GM12878 (cell line): ENCODE measurements at regions of chr20 and their contacts with region 1.

Region 1: DNA sequence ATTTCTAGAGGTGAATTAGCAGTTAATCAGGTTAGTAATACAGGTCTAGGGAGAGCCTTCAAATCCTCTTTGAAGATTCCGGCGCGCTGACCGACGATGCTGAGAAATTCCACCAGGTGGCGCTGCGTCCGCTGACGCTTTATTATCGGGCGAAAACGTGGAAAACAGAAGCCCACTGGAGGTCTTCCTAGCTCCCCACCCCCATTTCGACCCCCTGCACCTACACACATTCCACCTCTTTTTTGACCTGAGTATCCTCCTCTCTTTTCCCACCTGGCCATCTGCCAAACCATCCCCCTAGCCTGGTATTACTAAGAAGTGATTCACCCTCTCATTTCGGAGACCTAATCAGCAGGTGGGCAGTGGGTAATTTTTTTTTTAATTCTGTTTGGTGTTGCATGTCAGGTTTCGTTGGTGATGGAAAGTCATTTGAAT is 65.4 kb upstream of the RIN2 start:
- DNase-seq: no peak
- ATAC-seq: peak; percentile 81
- H3K4me3 ChIP-seq: no peak overlapping the region
- H3K27ac ChIP-seq: no peak overlapping the region
- H3K4me1 ChIP-seq: no peaks in the 10 kb centered on the region
- H3K27me3 ChIP-seq: peaks cover 0 to 2% of the 10 kb centered on the region in 2 experiments; a peak in 2 of 4 replicates
- CTCF ChIP-seq: peak; percentile 82 to 88 (median 85)
- EP300 ChIP-seq: no peak
- POLR2A ChIP-seq: no peak
- RAD21 ChIP-seq: peak; percentile 62

Region 2: DNA sequence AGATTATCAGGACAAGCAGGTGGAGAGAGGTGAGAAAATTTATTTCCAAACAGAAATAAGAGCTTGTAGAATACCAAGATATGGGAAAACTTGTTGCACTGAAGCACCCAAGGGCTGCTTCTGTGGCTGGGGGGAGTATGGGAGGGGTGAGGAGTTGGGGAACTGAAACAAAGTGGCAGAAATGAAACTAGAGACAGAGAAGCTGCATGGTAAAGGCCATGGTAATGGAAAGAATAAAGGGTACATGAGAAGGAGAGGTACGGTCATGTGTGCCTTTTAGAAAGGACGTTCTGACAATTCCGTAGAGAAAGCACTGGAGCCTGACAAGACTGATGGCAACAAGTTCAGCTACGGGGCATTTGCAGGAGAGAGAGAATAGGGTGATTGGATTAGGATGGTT is 13.8 kb after region 1 on chr20:
- CTCF ChIA-PET with region 1: interaction called, 12 read pairs
- POLR2A ChIA-PET with region 1: interaction called, 3 read pairs
- RAD21 ChIA-PET with region 1: interaction called, 4 read pairs
- SMC1A ChIA-PET with region 1: interaction called, 25 read pairs
- in situ Hi-C with region 1: no loop called
- intact Hi-C with region 1: no loop called
- DNase-seq: peak; percentile 27
- ATAC-seq: peak; percentile 89
- H3K4me3 ChIP-seq: no peak overlapping the region
- H3K27ac ChIP-seq: no peak overlapping the region
- H3K4me1 ChIP-seq: no peaks in the 10 kb centered on the region
- H3K27me3 ChIP-seq: peaks cover 0 to 3% of the 10 kb centered on the region in 2 experiments; a peak in 2 of 4 replicates
- CTCF ChIP-seq: no peak
- EP300 ChIP-seq: no peak
- POLR2A ChIP-seq: no peak
- RAD21 ChIP-seq: no peak

Region 3: DNA sequence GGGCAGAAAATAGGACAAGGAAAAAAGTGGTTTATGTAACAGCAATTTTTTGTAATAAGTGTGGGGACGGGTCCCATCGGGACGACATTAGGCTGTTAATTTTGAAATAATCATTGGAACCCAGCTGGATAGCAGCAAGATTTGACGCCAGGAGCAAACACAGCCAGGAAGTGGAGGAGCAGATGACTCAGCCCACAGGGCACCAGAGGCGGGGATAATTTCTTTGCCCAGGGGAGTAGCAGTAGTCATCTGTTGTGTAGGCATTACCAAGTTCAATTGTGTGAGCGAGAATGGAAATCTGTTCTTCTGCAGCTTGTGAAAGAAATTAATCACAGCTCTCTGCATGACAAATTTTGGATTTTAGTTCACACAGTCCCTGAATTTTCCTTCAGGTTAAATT is 42.7 kb after region 1 on chr20:
- CTCF ChIA-PET with region 1: interaction called, 9 read pairs
- POLR2A ChIA-PET with region 1: interaction called, 4 read pairs
- RAD21 ChIA-PET with region 1: interaction called, 10 read pairs
- SMC1A ChIA-PET with region 1: interaction called, 5 read pairs
- in situ Hi-C with region 1: no loop called
- intact Hi-C with region 1: no loop called
- DNase-seq: peak; percentile 3
- ATAC-seq: peak; percentile 77
- H3K4me3 ChIP-seq: no peak overlapping the region
- H3K27ac ChIP-seq: no peak overlapping the region
- H3K4me1 ChIP-seq: no peaks in the 10 kb centered on the region
- H3K27me3 ChIP-seq: no peaks in the 10 kb centered on the region
- CTCF ChIP-seq: no peak
- EP300 ChIP-seq: no peak
- POLR2A ChIP-seq: no peak
- RAD21 ChIP-seq: no peak

Region 4: GRCh38 chr20:19775360-19776253 is 82.9 kb after region 1 on chr20:
- CTCF ChIA-PET with region 1: interaction called, 12 read pairs
- POLR2A ChIA-PET with region 1: no interaction called
- RAD21 ChIA-PET with region 1: interaction called, 20 read pairs
- SMC1A ChIA-PET with region 1: interaction called, 16 read pairs
- in situ Hi-C with region 1: no loop called
- intact Hi-C with region 1: loop called (anchors 1 kb)
- DNase-seq: no peak
- ATAC-seq: no peak
- H3K4me3 ChIP-seq: no peak overlapping the region
- H3K27ac ChIP-seq: no peak overlapping the region
- H3K4me1 ChIP-seq: peaks cover 7% of the 10 kb centered on the region; the same call in 1 of the 2 replicates
- H3K27me3 ChIP-seq: peaks cover 0 to 1% of the 10 kb centered on the region in 2 experiments; a peak in 3 of 4 replicates
- CTCF ChIP-seq: no peak
- EP300 ChIP-seq: no peak
- POLR2A ChIP-seq: no peak
- RAD21 ChIP-seq: no peak

Region 5: DNA sequence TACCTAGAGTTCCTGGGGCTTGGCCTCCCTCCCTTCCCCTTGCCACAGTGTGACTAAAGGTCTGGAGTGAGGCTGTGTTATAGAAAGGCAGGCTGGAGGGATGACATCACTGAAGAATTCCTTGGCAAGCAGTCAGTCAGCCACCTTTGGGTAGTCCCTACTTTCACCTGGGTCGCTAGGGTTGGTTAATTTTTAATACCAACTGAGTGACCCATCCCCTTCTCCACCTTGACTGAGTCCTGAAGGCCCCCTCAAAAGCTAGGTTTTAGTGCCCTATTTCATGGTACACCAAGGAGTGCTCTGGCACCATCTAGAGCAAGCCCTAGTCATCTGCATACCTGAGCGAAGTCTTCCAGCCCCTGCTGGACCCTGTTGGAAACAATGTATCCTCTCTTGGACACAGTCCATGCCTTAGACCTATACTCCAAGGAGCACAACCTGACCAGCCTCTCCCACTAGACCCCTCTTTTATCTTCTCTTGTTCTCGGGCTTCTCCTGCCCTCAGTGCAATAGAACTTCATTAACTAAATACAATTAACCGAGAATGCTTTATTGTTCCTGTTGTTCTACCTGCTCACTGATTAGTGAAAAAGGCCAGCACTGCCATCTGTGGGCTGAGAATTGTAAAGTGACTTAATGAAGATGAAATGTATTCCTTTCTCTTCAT is 109.9 kb after region 1 on chr20:
- CTCF ChIA-PET with region 1: interaction called, 16 read pairs
- POLR2A ChIA-PET with region 1: no interaction called
- RAD21 ChIA-PET with region 1: interaction called, 3 read pairs
- SMC1A ChIA-PET with region 1: interaction called, 6 read pairs
- in situ Hi-C with region 1: no loop called
- intact Hi-C with region 1: loop called (anchors 2 kb)
- DNase-seq: no peak
- ATAC-seq: peak; percentile 82
- H3K4me3 ChIP-seq: no peak overlapping the region
- H3K27ac ChIP-seq: no peak overlapping the region
- H3K4me1 ChIP-seq: no peaks in the 10 kb centered on the region
- H3K27me3 ChIP-seq: no peaks in the 10 kb centered on the region
- CTCF ChIP-seq: peak in 2 of 3 experiments; percentile 12 to 29; a peak in 3 of 6 replicates
- EP300 ChIP-seq: no peak
- POLR2A ChIP-seq: no peak
- RAD21 ChIP-seq: 0 out of 2 replicates have a peak, but pooled peaks have one; percentile 1